ENCODE measurements at regions of chr2 and their contacts with region 1.

Region 1: GRCh38 chr2:56376699-56377665 is 193.2 kb downstream of the CCDC85A start:
- DNase-seq: peak; percentile 18
- H3K4me3 ChIP-seq: no peak overlapping the region
- H3K27ac ChIP-seq: no peak overlapping the region
- H3K4me1 ChIP-seq: peaks cover 7% of the 10 kb centered on the region
- H3K27me3 ChIP-seq: no peaks in the 10 kb centered on the region
- CTCF ChIP-seq: no peak

Region 2: GRCh38 chr2:55961318-55961911 is 415.6 kb before region 1 on chr2:
- CTCF ChIA-PET with region 1: no interaction called
- dilution Hi-C with region 1: no loop called
- in situ Hi-C with region 1: no loop called
- intact Hi-C with region 1: no loop called
- DNase-seq: peak; percentile 55
- H3K4me3 ChIP-seq: no peak overlapping the region
- H3K27ac ChIP-seq: no peak overlapping the region
- H3K4me1 ChIP-seq: peaks cover 20% of the 10 kb centered on the region
- H3K27me3 ChIP-seq: no peaks in the 10 kb centered on the region
- CTCF ChIP-seq: peak; percentile 54 to 74

Region 3: DNA sequence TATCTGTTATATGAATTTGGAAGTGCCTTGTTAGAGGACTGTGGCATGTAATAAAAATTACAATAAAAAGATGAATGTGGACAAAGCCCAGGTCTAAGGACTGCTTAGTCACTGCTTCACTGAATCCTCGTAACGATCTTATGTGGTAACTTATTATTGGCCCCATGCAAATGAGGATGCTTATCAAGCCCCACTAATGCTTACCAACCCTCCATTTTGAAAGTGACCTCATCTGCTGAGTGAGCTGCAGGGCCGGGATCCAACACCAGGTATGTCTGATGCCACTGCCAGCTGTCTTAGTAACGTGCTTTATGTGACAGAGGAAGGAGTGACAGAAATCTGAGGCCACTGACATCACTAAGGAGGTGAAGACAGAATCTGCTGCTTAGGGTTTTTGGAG is 258.5 kb before region 1 on chr2:
- CTCF ChIA-PET with region 1: no interaction called
- dilution Hi-C with region 1: no loop called
- in situ Hi-C with region 1: no loop called
- intact Hi-C with region 1: no loop called
- DNase-seq: no peak
- H3K4me3 ChIP-seq: no peak overlapping the region
- H3K27ac ChIP-seq: no peak overlapping the region
- H3K4me1 ChIP-seq: peaks cover 4% of the 10 kb centered on the region
- H3K27me3 ChIP-seq: no peaks in the 10 kb centered on the region
- CTCF ChIP-seq: no peak

Region 4: GRCh38 chr2:56202381-56203121 is 174.4 kb before region 1 on chr2:
- CTCF ChIA-PET with region 1: no interaction called
- dilution Hi-C with region 1: no loop called
- in situ Hi-C with region 1: no loop called
- intact Hi-C with region 1: loop called (anchors 10 kb)
- DNase-seq: no peak
- H3K4me3 ChIP-seq: no peak overlapping the region
- H3K27ac ChIP-seq: no peak overlapping the region
- H3K4me1 ChIP-seq: peaks cover 33% of the 10 kb centered on the region
- H3K27me3 ChIP-seq: no peaks in the 10 kb centered on the region
- CTCF ChIP-seq: no peak